Left cardiac atrium (tissue), 4 donors: ENCODE measurements at regions of chr12 and their contacts with region 1.

Region 1: GRCh38 chr12:105164068-105164467 is 56.5 kb downstream of the WASHC4 start:
- DNase-seq: no peak
- ATAC-seq: no peak

Region 2: GRCh38 chr12:105109465-105110212 is 54.4 kb before region 1 on chr12:
- intact Hi-C with region 1: loop called in 1 of 2 experiments (anchors 10 kb)
- DNase-seq: no peak
- ATAC-seq: no peak